Activated CD8-positive, alpha-beta T cell treated with anti-CD3 and anti-CD28 coated beads for 36 hours (primary cell): ENCODE measurements at regions of chr15 and their contacts with region 1.

Region 1: GRCh38 chr15:69462493-69463181 is 10.0 kb downstream of the RPLP1 start:
- DNase-seq: peak; percentile 94
- ATAC-seq: peak; percentile 98
- H3K4me3 Mint-ChIP-seq: peak overlapping the region; percentile 79
- H3K27ac Mint-ChIP-seq: peak overlapping the region; percentile 83
- H3K4me1 Mint-ChIP-seq: peaks cover 26% of the 10 kb centered on the region
- H3K27me3 Mint-ChIP-seq: no peaks in the 10 kb centered on the region
- CTCF ChIP-seq: peak; percentile 76

Region 2: DNA sequence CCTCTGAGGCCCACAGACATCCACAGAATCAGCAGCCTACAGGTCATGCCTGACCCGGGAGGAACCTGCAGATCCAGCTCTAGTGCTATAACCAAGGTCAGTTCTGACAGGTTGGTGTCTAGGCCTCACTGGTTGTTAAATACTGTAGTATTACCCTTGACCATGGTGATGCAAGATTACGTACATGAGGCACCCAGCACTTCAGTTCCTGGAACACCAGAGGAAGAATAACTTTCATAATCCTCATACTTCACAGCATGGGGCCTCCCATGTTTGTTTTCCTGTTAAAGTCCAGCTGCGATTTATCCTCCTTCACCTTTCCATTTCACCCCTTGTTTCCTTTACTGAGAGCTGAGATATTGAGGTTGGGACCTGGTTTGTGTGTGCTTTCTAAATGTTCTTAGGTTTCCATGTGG is 336.6 kb before region 1 on chr15:
- CTCF ChIA-PET with region 1: no interaction called
- POLR2A ChIA-PET with region 1: no interaction called
- intact Hi-C with region 1: no loop called
- DNase-seq: no peak
- ATAC-seq: no peak
- H3K4me3 Mint-ChIP-seq: no peak overlapping the region
- H3K27ac Mint-ChIP-seq: peak overlapping the region; percentile 27
- H3K4me1 Mint-ChIP-seq: peaks cover 8% of the 10 kb centered on the region
- H3K27me3 Mint-ChIP-seq: no peaks in the 10 kb centered on the region
- CTCF ChIP-seq: no peak

Region 3: GRCh38 chr15:69413822-69414700 is 48.6 kb before region 1 on chr15 and contains the start of gene KIF23:
- CTCF ChIA-PET with region 1: interaction called, 14 read pairs
- POLR2A ChIA-PET with region 1: interaction called, 3 read pairs
- intact Hi-C with region 1: no loop called
- DNase-seq: peak; percentile 95
- ATAC-seq: peak; percentile 94
- H3K4me3 Mint-ChIP-seq: peak within 1 kb of the TSS; percentile 81
- H3K27ac Mint-ChIP-seq: peak within 1 kb of the TSS; percentile 70
- H3K4me1 Mint-ChIP-seq: peaks cover 14% of the 10 kb centered on the region
- H3K27me3 Mint-ChIP-seq: peaks cover 8% of the 10 kb centered on the region
- CTCF ChIP-seq: no peak
- total RNA-seq, gene KIF23: 45.4 to 47.0 TPM